ENCODE measurements at regions of chr17 and their contacts with region 1.

Region 1: GRCh38 chr17:41548844-41549595 is 20.9 kb upstream of the KRT19 start:
- DNase-seq: peak; percentile 91
- H3K4me3 ChIP-seq: peak overlapping the region in 1 of 3 experiments; percentile 23
- H3K27ac ChIP-seq: peak overlapping the region; percentile 85
- H3K4me1 ChIP-seq: peaks cover 52% of the 10 kb centered on the region
- H3K27me3 ChIP-seq: no peaks in the 10 kb centered on the region
- CTCF ChIP-seq: peak; percentile 91 to 96

Region 2: DNA sequence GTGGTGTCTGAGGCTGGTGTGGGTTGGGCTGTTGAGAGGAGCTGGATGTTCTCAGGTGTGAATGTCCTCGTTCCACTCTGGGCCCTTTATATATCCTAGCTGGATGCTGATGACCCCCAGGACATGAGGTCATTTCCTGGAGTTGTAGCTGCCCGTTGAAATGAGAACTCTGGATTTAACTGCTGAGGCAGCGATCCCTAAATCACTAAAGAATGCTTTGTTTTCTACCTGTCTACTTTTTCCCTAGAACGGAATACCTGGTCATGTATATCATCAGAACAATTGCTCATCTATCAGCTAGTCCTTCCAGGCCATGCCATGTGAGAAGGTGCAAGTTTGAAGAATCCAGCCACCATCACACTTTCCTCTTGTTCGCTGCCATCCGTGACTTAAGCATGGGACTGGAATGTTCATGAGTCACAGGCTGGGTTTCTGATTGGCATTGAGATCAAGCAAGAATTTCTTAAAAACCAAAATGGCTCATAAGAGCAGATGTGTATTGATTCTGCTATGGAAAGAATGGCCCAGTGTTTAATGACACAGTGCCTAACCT is 488.9 kb before region 1 on chr17 and contains the start of gene KRTAP2-3:
- CTCF ChIA-PET with region 1: interaction called, 3 read pairs
- dilution Hi-C with region 1: no loop called
- in situ Hi-C with region 1: no loop called
- intact Hi-C with region 1: loop called (anchors 5 kb)
- DNase-seq: peak; percentile 97
- H3K4me3 ChIP-seq: no peak within 1 kb of the TSS
- H3K27ac ChIP-seq: peak within 1 kb of the TSS; percentile 60
- H3K4me1 ChIP-seq: peaks cover 33% of the 10 kb centered on the region
- H3K27me3 ChIP-seq: no peaks in the 10 kb centered on the region
- CTCF ChIP-seq: no peak
- total RNA-seq, gene KRTAP2-3: 4.8 to 27.5 TPM

Region 3: GRCh38 chr17:41301916-41302901 is 246.8 kb before region 1 on chr17 and contains the start of gene KRTAP29-1:
- CTCF ChIA-PET with region 1: no interaction called
- dilution Hi-C with region 1: no loop called
- in situ Hi-C with region 1: no loop called
- intact Hi-C with region 1: no loop called
- DNase-seq: no peak
- H3K4me3 ChIP-seq: no peak within 1 kb of the TSS
- H3K27ac ChIP-seq: peak within 1 kb of the TSS; percentile 73
- H3K4me1 ChIP-seq: peaks cover 27% of the 10 kb centered on the region
- H3K27me3 ChIP-seq: no peaks in the 10 kb centered on the region
- CTCF ChIP-seq: no peak
- total RNA-seq, gene KRTAP29-1: 0.17 TPM in 1 of 2 donors, not detected in the other

Region 4: GRCh38 chr17:41403798-41404671 is 145.0 kb before region 1 on chr17:
- CTCF ChIA-PET with region 1: interaction called, 37 read pairs
- dilution Hi-C with region 1: no loop called
- in situ Hi-C with region 1: no loop called
- intact Hi-C with region 1: loop called (anchors 1 kb)
- DNase-seq: peak; percentile 100
- H3K4me3 ChIP-seq: no peak overlapping the region
- H3K27ac ChIP-seq: peak overlapping the region; percentile 94
- H3K4me1 ChIP-seq: peaks cover 32% of the 10 kb centered on the region
- H3K27me3 ChIP-seq: no peaks in the 10 kb centered on the region
- CTCF ChIP-seq: no peak

Region 5: DNA sequence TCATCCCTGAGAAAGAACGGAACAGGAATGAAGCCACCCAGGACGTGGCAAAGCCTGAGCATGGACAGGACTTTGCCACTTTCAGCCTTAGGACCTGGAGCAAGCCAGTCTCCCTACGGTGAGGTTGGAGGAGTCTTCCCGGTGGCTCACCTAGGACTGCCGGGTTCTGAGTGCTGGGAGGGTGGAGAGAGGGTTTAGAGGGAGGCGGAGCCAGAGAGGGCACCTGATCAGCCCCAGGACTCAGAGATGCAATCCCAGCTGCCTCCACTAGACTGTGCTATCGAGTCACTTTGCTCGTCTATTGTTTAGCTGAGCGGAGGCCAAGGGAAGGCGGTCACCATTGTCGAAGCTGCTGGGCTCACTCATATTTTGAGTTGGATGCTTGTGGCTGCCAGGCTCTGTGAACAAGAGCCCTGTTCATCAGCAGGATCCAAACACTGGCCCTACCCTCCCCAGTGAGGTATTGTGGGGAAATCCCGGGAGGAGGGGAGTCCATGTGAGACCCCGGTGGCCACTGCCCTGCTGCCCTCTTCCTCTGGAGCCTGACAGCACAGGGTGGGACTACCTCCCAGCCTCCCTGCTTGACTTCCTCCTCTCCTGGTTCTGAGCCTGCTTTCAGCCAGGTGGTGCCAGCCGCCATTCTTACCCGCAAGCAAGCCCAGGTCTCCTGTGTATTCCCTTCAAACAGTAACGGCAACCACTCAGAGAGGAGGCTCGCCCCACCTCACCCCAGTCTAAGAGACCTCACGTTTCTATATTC is 30.6 kb after region 1 on chr17:
- CTCF ChIA-PET with region 1: interaction called, 9 read pairs
- dilution Hi-C with region 1: no loop called
- in situ Hi-C with region 1: no loop called
- intact Hi-C with region 1: loop called (anchors 1 kb)
- DNase-seq: peak; percentile 98
- H3K4me3 ChIP-seq: no peak overlapping the region
- H3K27ac ChIP-seq: peak overlapping the region; percentile 97
- H3K4me1 ChIP-seq: peaks cover 63% of the 10 kb centered on the region
- H3K27me3 ChIP-seq: no peaks in the 10 kb centered on the region
- CTCF ChIP-seq: peak; percentile 93 to 96

Region 6: DNA sequence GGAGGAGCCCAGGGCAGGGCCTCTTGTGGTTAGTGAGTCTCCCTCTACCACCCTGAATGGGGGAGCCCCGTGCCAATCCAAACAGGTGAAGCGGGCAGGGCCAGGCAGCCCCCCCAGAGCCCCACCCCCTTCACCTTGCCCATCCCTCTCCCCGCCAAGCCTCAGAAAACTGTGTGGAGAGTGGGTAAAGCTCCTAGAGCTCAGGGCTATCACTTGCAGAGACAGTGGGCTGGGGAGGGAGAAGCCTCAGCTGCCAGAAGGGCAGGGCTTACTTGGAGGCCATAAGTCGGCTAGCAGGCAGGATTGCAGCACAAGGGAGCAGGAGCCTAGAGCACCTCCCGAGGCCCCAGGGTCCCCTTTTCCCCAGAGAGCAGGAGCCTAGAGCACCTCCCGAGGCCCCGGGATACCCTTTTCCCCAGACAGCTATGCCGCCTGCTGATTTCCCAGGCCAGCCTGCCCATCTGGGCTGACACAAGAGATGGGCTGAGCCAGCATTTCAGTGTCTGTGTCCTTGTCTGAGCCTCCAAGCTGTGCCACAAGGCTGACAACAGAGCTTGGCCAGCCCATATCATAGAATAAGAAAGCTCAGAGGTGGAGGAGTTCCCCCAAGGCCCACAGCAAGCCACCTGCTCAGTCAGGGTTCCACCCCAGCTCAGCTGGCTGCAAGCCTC is 44.4 kb after region 1 on chr17:
- CTCF ChIA-PET with region 1: no interaction called
- dilution Hi-C with region 1: no loop called
- in situ Hi-C with region 1: no loop called
- intact Hi-C with region 1: no loop called
- DNase-seq: no peak
- H3K4me3 ChIP-seq: no peak overlapping the region
- H3K27ac ChIP-seq: no peak overlapping the region
- H3K4me1 ChIP-seq: peaks cover 12% of the 10 kb centered on the region
- H3K27me3 ChIP-seq: no peaks in the 10 kb centered on the region
- CTCF ChIP-seq: no peak

Region 7: GRCh38 chr17:41655611-41656351 is 106.8 kb after region 1 on chr17:
- CTCF ChIA-PET with region 1: interaction called, 12 read pairs
- dilution Hi-C with region 1: loop called (anchors 5 kb)
- in situ Hi-C with region 1: loop called in 1 of 2 experiments (anchors 10 kb)
- intact Hi-C with region 1: no loop called
- DNase-seq: peak; percentile 100
- H3K4me3 ChIP-seq: no peak overlapping the region
- H3K27ac ChIP-seq: peak overlapping the region; percentile 100
- H3K4me1 ChIP-seq: peaks cover 92% of the 10 kb centered on the region
- H3K27me3 ChIP-seq: no peaks in the 10 kb centered on the region
- CTCF ChIP-seq: no peak

Region 8: GRCh38 chr17:41710468-41711090 is 161.6 kb after region 1 on chr17:
- CTCF ChIA-PET with region 1: no interaction called
- dilution Hi-C with region 1: no loop called
- in situ Hi-C with region 1: no loop called
- intact Hi-C with region 1: no loop called
- DNase-seq: peak; percentile 47
- H3K4me3 ChIP-seq: no peak overlapping the region
- H3K27ac ChIP-seq: no peak overlapping the region
- H3K4me1 ChIP-seq: peaks cover 3% of the 10 kb centered on the region
- H3K27me3 ChIP-seq: no peaks in the 10 kb centered on the region
- CTCF ChIP-seq: no peak